Prostate gland (tissue), 2 donors: ENCODE measurements at regions of chr7 and their contacts with region 1.

Region 1: DNA sequence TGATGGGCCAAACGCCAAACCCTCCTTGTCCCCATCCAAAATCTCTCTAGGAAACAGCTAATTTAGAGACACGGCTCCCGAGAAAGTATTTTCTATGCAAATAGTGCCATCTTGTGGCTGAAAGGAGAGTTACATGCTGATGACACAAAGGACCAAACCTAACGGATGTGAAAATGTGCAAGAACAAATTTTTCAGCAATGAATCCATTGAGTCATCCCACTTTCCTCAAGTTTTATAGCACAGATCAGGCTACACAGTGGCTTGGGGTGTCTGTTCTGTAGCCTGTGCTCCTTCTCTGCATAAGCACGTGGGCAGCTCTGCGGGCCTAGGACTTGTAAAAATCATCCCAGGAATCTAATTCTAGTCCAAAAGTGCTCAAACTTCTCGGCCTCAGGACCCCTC is 154.8 kb upstream of the PRR15 start:
- DNase-seq: peak; percentile 74
- H3K4me3 ChIP-seq: no peak overlapping the region
- H3K27ac ChIP-seq: no peak overlapping the region
- H3K4me1 ChIP-seq: no peaks in the 10 kb centered on the region
- H3K27me3 ChIP-seq: no peaks in the 10 kb centered on the region
- CTCF ChIP-seq: peak; percentile 80 to 94 (median 88)
- POLR2A ChIP-seq: no peak

Region 2: GRCh38 chr7:28921822-28922221 is 487.0 kb before region 1 on chr7:
- intact Hi-C with region 1: loop called (anchors 2 kb)
- DNase-seq: peak; percentile 63
- H3K4me3 ChIP-seq: no peak overlapping the region
- H3K27ac ChIP-seq: no peak overlapping the region
- H3K4me1 ChIP-seq: peaks cover 4% of the 10 kb centered on the region
- H3K27me3 ChIP-seq: no peaks in the 10 kb centered on the region
- CTCF ChIP-seq: peak; percentile 72 to 83 (median 79)
- POLR2A ChIP-seq: no peak

Region 3: DNA sequence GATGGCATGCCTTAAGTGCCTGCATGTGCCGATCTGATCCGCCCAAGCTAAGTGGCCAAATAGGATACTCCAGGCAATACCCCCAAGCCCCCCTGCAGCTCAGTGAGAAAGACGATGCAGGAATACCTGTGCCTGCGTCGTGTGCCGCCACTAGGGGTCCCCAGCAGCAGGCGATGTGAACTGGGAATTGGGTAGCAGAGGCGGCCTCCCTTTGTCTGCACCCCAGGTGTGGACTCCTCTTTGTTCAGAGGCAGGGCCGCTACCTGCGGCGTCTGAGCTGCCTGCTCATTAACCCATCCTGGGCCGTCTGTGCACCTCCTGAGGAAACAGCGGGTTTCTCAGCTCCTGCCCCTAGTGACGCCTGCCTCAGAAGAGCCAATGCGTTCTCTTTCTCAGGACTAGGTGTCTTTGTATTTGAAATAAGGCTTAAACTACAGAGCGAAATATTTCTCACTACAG is 219.1 kb before region 1 on chr7:
- intact Hi-C with region 1: loop called (anchors 2 kb)
- DNase-seq: peak; percentile 58
- H3K4me3 ChIP-seq: no peak overlapping the region
- H3K27ac ChIP-seq: no peak overlapping the region
- H3K4me1 ChIP-seq: no peaks in the 10 kb centered on the region
- H3K27me3 ChIP-seq: no peaks in the 10 kb centered on the region
- CTCF ChIP-seq: peak; percentile 69 to 76 (median 75)
- POLR2A ChIP-seq: no peak

Region 4: DNA sequence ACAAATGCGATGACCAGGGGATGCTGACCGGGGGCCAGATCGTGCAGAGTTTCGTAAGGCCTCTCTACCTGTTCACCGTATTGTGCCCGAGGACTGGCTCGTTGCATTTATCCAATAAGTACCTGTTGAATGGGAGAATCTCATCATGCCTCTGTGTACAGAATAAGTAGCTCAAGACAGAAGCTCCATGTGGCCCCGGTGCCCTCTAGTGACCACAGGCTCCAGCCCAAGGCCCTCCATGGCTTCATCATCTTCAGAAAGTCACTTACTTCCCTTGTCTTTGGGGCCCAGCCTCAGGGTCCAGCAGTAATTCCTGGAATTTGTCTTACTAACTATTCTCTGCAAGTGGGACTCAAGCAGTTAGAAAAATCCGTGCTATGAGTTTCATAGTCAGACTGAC is 63.2 kb before region 1 on chr7:
- intact Hi-C with region 1: no loop called
- DNase-seq: peak; percentile 31
- H3K4me3 ChIP-seq: no peak overlapping the region
- H3K27ac ChIP-seq: no peak overlapping the region
- H3K4me1 ChIP-seq: no peaks in the 10 kb centered on the region
- H3K27me3 ChIP-seq: no peaks in the 10 kb centered on the region
- CTCF ChIP-seq: peak in 2 of 4 experiments; percentile 17 to 29
- POLR2A ChIP-seq: no peak